ENCODE measurements at regions of chr6 and their contacts with region 1.

Region 1: DNA sequence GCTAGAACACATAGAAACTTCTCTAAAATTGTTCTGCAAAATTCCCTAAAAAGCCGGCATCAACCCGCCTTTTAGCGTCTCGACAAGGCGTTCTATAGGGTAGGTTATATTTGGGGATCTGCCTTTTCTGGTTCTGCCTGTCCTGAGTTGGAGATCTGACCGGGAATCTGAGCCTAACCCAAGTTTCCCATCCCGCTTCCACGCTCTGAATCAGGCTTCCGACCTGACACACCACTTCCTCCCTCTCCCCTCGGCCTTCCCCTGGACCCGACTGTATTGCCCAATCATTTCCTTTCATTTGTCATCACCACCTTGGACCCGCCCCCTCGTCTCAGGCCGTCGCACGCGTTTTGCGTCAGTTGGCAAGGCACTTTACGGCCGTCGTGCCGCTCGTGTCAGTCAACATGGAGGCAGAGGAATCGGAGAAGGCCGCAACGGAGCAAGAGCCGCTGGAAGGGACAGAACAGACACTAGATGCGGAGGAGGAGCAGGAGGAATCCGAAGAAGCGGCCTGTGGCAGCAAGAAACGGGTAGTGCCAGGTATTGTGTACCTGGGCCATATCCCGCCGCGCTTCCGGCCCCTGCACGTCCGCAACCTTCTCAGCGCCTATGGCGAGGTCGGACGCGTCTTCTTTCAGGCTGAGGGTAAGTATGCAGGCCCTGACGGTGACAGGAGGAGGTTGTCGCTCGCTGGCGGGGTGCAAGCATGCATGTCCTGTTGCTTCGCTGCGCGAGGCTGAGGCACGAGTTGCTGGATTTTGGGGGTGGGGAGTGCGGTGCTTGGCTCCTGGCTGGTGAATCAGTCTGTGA is at the start of gene ABT1:
- DNase-seq: peak; percentile 99
- H3K4me3 ChIP-seq: peak within 1 kb of the TSS; percentile 90
- H3K27ac ChIP-seq: peak within 1 kb of the TSS; percentile 82
- H3K4me1 ChIP-seq: peaks cover 7% of the 10 kb centered on the region
- H3K27me3 ChIP-seq: no peaks in the 10 kb centered on the region
- CTCF ChIP-seq: no peak
- total RNA-seq, gene ABT1: 17.4 and 18.1 TPM in 2 replicates

Region 2: GRCh38 chr6:26342106-26343004 is 254.4 kb before region 1 on chr6:
- CTCF ChIA-PET with region 1: interaction called, 33 read pairs
- POLR2A ChIA-PET with region 1: no interaction called
- intact Hi-C with region 1: loop called (anchors 1 kb)
- DNase-seq: no peak
- H3K4me3 ChIP-seq: peak overlapping the region; percentile 34
- H3K27ac ChIP-seq: no peak overlapping the region
- H3K4me1 ChIP-seq: peaks cover 4% of the 10 kb centered on the region
- H3K27me3 ChIP-seq: no peaks in the 10 kb centered on the region
- CTCF ChIP-seq: no peak

Region 3: GRCh38 chr6:26576929-26577719 is 19.7 kb before region 1 on chr6:
- CTCF ChIA-PET with region 1: interaction called, 33 read pairs
- POLR2A ChIA-PET with region 1: no interaction called
- intact Hi-C with region 1: loop called (anchors 1 kb)
- DNase-seq: peak; percentile 88
- H3K4me3 ChIP-seq: peak overlapping the region; percentile 54
- H3K27ac ChIP-seq: peak overlapping the region; percentile 36
- H3K4me1 ChIP-seq: peaks cover 8% of the 10 kb centered on the region
- H3K27me3 ChIP-seq: no peaks in the 10 kb centered on the region
- CTCF ChIP-seq: no peak

Region 4: DNA sequence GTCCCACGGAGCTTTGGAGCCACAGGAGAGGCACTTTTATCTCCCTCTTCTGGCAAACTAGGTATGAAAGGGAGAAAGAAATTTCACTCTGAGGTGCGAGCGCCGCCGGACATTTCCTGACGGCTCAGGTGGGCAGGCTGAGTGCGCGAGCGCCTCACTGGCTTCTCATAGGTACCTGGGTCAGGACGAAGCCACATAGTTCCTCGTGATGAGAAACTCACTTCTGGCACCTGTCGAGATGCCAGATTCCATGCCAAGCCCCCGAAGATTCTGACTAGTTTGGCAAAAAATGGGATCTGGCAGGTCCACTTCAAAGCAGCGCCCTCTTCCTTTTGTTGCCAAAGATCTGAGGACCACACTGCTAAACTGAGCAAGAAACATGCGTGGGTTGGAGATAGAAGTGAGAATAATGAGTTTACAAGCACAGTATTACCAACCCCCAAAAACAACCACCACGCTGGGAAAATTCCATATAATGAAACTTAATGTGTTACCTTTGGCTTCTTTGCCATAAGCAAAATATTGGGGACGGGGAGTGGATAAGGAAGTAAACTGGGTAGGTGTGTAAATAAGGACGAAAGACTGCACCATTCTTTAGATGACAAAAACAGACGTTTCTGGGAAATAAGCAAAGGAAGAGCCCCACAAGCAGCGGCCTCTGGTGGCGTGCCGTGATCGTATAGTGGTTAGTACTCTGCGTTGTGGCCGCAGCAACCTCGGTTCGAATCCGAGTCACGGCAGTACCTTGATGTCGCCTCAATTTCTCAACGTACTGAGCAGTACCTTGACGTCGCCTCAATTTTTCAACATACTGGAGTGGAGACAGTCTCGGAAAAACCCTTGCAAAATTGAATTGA is 560.9 kb after region 1 on chr6:
- CTCF ChIA-PET with region 1: interaction called, 12 read pairs
- POLR2A ChIA-PET with region 1: no interaction called
- intact Hi-C with region 1: no loop called
- DNase-seq: peak; percentile 85
- H3K4me3 ChIP-seq: peak overlapping the region; percentile 53
- H3K27ac ChIP-seq: no peak overlapping the region
- H3K4me1 ChIP-seq: no peaks in the 10 kb centered on the region
- H3K27me3 ChIP-seq: no peaks in the 10 kb centered on the region
- CTCF ChIP-seq: peak; percentile 57